ENCODE measurements at regions of chr6 and their contacts with region 1.

Region 1: DNA sequence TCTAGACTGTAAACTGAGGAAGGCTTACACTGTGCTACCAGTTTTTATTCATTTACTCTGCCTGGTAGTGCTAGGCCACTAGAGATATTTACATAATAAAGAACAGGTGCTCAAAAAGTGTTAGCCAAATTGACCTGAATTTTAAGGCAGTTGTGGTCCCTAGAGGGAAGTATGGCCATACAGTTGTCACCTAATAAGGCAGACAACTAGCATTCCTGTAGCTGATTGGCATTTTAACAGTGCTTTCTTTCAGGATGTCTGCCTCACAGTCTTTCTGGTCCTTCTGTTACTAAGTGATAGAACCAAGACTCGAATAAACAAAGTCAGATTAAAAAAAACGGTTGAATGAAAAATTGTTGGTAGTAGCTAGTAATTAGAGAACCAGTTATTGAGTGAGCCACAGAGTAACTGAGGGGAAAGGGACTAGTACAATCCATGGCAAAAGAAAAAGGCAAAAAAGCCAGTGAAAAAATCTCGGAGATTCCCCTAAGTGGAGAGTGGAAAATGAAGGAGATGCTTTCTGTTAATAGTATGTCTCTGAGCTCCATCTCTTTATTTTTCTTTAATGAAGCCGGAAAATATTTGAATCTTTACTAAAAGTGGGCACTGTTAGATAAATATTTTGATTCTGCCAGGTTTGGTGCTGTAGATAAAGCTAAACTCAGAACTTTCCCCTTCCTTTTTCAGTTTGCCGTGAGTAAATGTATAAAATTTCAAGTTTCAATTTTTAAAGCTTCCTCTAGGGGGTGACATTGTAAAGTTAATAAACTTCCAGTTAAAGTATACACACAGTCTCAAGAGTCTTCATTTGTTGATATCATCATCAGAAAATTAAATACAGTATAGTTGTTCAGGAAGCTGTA is 9.1 kb downstream of the VTA1 start:
- DNase-seq: peak in 1 of 2 experiments; percentile 10
- H3K4me3 ChIP-seq: peak overlapping the region in 1 of 4 experiments; percentile 20; a peak in 1 of 8 replicates
- H3K27ac ChIP-seq: no peak overlapping the region
- H3K4me1 ChIP-seq: peaks cover 0 to 6% (median 1%) of the 10 kb centered on the region in 4 experiments; a peak in 3 of 7 replicates
- H3K27me3 ChIP-seq: no peaks in the 10 kb centered on the region
- CTCF ChIP-seq: peak in 2 of 3 experiments; percentile 16 to 20; a peak in 2 of 4 replicates
- EP300 ChIP-seq: no peak
- POLR2A ChIP-seq: no peak
- RAD21 ChIP-seq: peak in 1 of 2 experiments; percentile 28; a peak in 3 of 4 replicates

Region 2: DNA sequence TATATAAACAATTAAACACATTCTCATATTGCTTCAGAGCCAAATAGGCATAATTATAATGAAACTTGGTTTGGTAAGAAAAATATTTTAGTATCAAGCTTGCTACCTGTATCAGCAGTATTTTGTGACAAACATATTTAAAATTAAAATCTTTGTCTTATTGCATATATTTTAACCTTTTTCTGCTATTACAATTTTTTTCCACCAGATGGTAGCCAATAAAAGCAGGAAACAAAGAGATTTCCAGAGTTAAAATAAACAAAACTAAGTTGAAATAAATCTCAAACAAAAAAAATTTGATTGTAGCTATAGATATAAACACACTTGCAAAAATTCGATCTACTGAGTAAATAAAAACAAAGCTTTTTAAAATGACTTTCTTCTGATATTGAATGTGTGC is 514.7 kb before region 1 on chr6:
- CTCF ChIA-PET with region 1: no interaction called
- POLR2A ChIA-PET with region 1: no interaction called
- DNase-seq: no peak
- H3K4me3 ChIP-seq: no peak overlapping the region
- H3K27ac ChIP-seq: no peak overlapping the region
- H3K4me1 ChIP-seq: no peaks in the 10 kb centered on the region
- H3K27me3 ChIP-seq: no peaks in the 10 kb centered on the region
- CTCF ChIP-seq: no peak
- EP300 ChIP-seq: no peak
- POLR2A ChIP-seq: no peak
- RAD21 ChIP-seq: no peak

Region 3: GRCh38 chr6:142071981-142072380 is 84.1 kb before region 1 on chr6:
- CTCF ChIA-PET with region 1: no interaction called
- POLR2A ChIA-PET with region 1: no interaction called
- DNase-seq: no peak
- H3K4me3 ChIP-seq: no peak overlapping the region
- H3K27ac ChIP-seq: no peak overlapping the region
- H3K4me1 ChIP-seq: no peaks in the 10 kb centered on the region
- H3K27me3 ChIP-seq: no peaks in the 10 kb centered on the region
- CTCF ChIP-seq: peak; percentile 15 to 49 (median 48)
- EP300 ChIP-seq: no peak
- POLR2A ChIP-seq: no peak
- RAD21 ChIP-seq: peak; percentile 42 to 56; a peak in 3 of 4 replicates

Region 4: GRCh38 chr6:142177201-142177600 is 21.1 kb after region 1 on chr6:
- CTCF ChIA-PET with region 1: interaction called, 13 read pairs
- POLR2A ChIA-PET with region 1: interaction called, 3 read pairs
- DNase-seq: no peak
- H3K4me3 ChIP-seq: no peak overlapping the region
- H3K27ac ChIP-seq: no peak overlapping the region
- H3K4me1 ChIP-seq: no peaks in the 10 kb centered on the region
- H3K27me3 ChIP-seq: no peaks in the 10 kb centered on the region
- CTCF ChIP-seq: no peak
- EP300 ChIP-seq: no peak
- POLR2A ChIP-seq: no peak
- RAD21 ChIP-seq: no peak

Region 5: GRCh38 chr6:142195862-142196541 is 39.9 kb after region 1 on chr6:
- CTCF ChIA-PET with region 1: interaction called, 20 read pairs
- POLR2A ChIA-PET with region 1: no interaction called
- DNase-seq: no peak
- H3K4me3 ChIP-seq: no peak overlapping the region
- H3K27ac ChIP-seq: no peak overlapping the region
- H3K4me1 ChIP-seq: no peaks in the 10 kb centered on the region
- H3K27me3 ChIP-seq: peaks cover 0 to 1% (median 0%) of the 10 kb centered on the region in 4 experiments; a peak in 1 of 7 replicates
- CTCF ChIP-seq: no peak
- EP300 ChIP-seq: no peak
- POLR2A ChIP-seq: no peak
- RAD21 ChIP-seq: no peak

Region 6: GRCh38 chr6:142218446-142218845 is 62.3 kb after region 1 on chr6:
- CTCF ChIA-PET with region 1: interaction called, 12 read pairs
- POLR2A ChIA-PET with region 1: no interaction called
- DNase-seq: no peak
- H3K4me3 ChIP-seq: no peak overlapping the region
- H3K27ac ChIP-seq: no peak overlapping the region
- H3K4me1 ChIP-seq: no peaks in the 10 kb centered on the region
- H3K27me3 ChIP-seq: no peaks in the 10 kb centered on the region
- CTCF ChIP-seq: no peak
- EP300 ChIP-seq: no peak
- POLR2A ChIP-seq: no peak
- RAD21 ChIP-seq: no peak

Region 7: GRCh38 chr6:142262231-142262630 is 106.1 kb after region 1 on chr6:
- CTCF ChIA-PET with region 1: no interaction called
- POLR2A ChIA-PET with region 1: no interaction called
- DNase-seq: no peak
- H3K4me3 ChIP-seq: no peak overlapping the region
- H3K27ac ChIP-seq: no peak overlapping the region
- H3K4me1 ChIP-seq: no peaks in the 10 kb centered on the region
- H3K27me3 ChIP-seq: peaks cover 0 to 1% (median 0%) of the 10 kb centered on the region in 4 experiments; a peak in 1 of 7 replicates
- CTCF ChIP-seq: no peak
- EP300 ChIP-seq: no peak
- POLR2A ChIP-seq: no peak
- RAD21 ChIP-seq: no peak

Measured in H1 (cell line).